ENCODE measurements at regions of chr9 and their contacts with region 1.

Region 1: DNA sequence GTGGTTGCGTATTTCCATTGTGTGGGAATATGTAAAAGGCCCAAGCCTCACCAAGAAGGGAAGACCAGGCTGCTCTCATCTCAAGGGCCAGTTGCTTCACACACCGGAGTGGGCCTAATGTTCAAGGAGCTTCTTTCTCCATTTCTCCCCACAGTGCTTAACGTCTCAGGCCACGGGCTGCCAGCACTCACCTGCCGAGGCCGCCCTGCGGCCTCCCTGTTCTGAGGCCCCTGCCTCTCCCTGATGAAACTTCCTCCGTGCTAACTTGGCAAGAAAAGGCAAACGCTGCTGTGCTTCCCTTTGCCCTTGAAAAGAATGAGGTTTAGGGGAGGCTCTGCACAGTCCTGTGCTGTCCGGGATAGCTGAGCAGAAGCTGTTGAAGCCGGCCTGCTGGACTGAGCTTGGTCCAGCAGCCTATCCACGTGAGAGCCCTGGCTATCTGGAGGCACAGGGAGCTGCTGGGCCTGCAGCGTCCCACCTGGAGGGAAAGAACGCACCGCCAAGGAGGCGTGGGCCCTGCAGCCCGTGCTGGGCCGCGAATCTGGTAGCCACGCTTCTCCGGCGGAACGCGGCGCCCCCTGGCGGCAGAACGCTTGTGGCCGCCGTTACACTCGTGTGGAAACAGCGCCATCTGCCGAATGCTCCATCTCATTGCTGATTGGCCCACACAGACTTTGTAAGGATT is 73.5 kb upstream of the PRSS3 start:
- DNase-seq: peak; percentile 69 to 93 (median 86)
- H3K4me3 ChIP-seq: no peak overlapping the region
- H3K27ac ChIP-seq: no peak overlapping the region
- H3K4me1 ChIP-seq: peaks cover 0 to 4% of the 10 kb centered on the region in 2 donors
- H3K27me3 ChIP-seq: no peaks in the 10 kb centered on the region
- CTCF ChIP-seq: peak; percentile 100
- POLR2A ChIP-seq: peak in 1 of 2 donors; percentile 39

Region 2: GRCh38 chr9:33426843-33427293 is 294.9 kb before region 1 on chr9:
- intact Hi-C with region 1: no loop called
- DNase-seq: no peak
- H3K4me3 ChIP-seq: no peak overlapping the region
- H3K27ac ChIP-seq: no peak overlapping the region
- H3K4me1 ChIP-seq: no peaks in the 10 kb centered on the region
- H3K27me3 ChIP-seq: no peaks in the 10 kb centered on the region
- CTCF ChIP-seq: no peak
- POLR2A ChIP-seq: no peak

Region 3: DNA sequence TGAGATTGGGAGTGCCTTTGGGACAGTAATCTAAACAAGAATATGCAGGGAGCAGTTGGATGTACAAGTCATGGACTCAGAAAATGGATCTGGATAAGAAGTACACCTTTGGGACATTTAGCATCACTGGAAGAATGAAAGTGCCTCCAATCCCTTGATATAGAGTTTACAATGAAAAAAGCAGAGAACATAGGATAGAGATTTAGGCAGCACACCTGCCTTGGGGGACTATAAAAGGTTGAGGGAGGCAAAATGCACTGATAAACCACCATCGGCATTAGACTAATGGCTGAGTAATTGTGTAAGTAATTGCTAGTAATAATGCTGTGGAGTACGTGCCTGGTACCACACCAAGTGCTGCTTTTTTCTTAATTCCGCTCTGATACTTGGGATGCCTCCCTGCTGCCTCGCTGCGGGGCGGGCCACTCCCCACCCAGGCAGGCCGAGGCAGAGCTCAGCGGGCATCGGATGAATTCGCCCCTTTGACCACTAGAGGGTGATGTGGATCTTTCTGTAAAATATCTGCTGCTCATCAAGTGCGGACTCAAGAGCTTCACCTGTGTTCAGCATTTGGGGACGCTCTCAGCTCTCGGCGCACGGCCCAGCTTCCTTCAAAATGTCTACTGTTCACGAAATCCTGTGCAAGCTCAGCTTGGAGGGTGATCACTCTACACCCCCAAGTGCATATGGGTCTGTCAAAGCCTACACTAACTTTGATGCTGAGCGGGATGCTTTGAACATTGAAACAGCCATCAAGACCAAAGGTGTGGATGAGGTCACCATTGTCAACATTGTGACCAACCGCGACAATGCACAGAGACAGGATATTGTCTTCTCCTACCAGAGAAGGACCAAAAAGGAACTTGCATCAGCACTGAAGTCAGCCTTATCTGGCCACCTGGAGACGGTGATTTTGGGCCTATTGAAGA is 97.9 kb before region 1 on chr9:
- intact Hi-C with region 1: loop called (anchors 2 to 5 kb)
- DNase-seq: peak; percentile 38 to 81 (median 58)
- H3K4me3 ChIP-seq: no peak overlapping the region
- H3K27ac ChIP-seq: no peak overlapping the region
- H3K4me1 ChIP-seq: no peaks in the 10 kb centered on the region
- H3K27me3 ChIP-seq: peaks cover 30% of the 10 kb centered on the region
- CTCF ChIP-seq: peak; percentile 75 to 93 (median 88)
- POLR2A ChIP-seq: no peak

Region 4: DNA sequence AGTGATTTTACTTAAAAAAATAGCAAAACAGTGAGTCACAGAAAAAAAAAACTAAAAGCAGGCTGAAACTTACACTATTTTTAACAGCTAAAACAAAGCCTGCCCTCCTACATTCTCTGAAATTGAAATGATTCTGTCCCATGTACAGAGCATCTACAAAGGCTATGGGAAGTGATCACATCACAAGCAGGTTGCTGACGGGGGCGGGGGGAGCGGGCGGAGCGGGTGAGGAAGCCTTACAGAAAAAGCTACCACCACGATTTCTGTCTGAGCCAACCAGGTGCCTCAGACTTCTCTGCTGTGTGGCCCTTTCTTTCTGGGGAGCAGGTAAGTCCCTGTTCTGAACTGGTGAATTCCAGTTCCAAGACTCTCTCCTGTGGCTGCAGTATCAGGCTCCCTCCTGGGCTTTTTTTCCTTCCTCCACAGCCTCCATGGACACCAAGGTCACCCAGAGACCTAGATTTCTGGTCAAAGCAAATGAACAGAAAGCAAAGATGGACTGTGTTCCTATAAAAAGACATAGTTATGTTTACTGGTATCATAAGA is 92.9 kb before region 1 on chr9:
- intact Hi-C with region 1: loop called (anchors 2 to 5 kb)
- DNase-seq: no peak
- H3K4me3 ChIP-seq: no peak overlapping the region
- H3K27ac ChIP-seq: no peak overlapping the region
- H3K4me1 ChIP-seq: no peaks in the 10 kb centered on the region
- H3K27me3 ChIP-seq: peaks cover 22% of the 10 kb centered on the region
- CTCF ChIP-seq: no peak
- POLR2A ChIP-seq: no peak